Endothelial cell of umbilical vein (primary cell): ENCODE measurements at regions of chr16 and their contacts with region 1.

Region 1: DNA sequence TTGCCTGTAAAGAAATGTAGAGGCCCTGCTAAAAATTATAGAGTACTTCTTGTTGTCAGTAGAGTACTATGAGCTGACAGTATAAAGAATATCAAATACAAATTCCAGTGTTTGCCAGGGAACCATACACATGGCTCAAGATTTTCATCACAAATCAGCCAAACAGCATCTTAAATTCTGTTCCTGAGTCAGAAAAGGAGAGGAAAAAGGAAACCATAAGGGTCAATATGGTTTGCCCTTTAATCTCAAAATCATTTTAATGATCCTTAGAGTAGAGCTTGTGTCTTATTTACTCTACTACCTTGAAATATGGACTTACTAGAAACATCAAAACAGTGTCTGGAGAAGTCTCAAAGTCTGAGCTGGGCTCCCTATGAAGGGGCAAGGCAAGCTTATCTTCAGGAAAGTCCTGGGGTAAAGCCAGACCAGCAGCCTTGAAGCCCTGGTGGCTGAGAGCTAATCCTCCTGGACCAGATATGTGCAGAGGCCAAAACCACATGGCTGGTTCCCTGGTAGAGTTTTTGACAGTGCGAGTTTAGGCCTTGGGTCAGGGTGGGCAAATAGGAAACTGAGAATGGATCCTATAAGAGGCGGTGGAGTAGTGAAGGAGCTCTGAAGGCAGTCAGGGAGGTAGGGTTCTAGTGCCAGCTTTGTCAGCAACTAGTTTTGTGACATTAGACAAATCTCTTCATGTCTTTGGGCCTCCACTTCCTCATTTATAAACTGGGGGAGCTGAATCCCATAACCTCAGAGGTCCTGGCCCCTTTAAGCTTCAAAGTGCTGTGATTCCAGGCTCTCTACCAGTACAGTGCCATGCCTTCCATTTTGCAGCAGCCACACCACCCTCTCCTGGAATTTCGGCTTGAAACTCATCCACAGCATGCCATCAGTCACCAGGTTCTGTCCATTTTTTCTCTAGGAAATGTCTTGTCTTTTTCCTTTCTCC is 38.9 kb downstream of the MRTFB start:
- DNase-seq: peak; percentile 40
- H3K4me3 ChIP-seq: no peak overlapping the region
- H3K27ac ChIP-seq: no peak overlapping the region
- H3K4me1 ChIP-seq: peaks cover 27% of the 10 kb centered on the region
- H3K27me3 ChIP-seq: no peaks in the 10 kb centered on the region
- CTCF ChIP-seq: no peak
- POLR2A ChIP-seq: no peak

Region 2: DNA sequence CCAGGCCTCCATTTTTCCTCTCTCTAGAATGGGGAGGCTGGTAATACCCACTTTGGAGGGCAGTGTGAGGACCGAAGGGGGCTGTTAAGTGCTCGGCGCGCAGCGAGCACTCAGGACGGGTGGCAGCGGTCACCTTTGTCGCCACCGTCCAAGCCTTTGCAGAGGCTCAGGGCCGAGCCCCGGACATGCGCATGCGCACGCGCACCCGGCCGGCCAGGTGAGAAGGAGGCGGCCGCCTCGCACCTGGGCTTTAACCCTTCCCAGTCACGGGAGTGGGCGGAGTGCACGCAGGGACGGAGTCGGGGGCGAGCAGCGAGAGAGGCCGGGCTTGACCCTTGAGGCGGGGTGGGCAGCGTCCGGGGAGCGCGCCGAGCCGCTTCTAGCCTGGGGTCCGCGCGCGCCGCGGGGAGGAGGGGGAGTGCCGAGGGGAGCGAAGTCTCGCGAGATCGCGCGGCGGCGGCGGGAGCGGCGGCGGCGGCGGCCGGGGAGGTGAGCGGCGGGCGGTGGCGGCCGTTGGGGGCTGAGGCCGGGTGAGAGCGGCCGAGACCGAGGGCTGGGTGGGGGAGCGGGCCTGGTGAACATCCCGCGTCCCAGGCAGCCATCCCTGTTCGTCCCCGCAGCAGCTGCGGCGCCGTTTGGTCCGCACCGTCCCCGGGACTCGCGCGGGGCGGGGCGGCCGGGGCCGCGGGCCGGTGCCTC is 39.0 kb before region 1 on chr16 and contains the start of gene MRTFB:
- CTCF ChIA-PET with region 1: no interaction called
- POLR2A ChIA-PET with region 1: no interaction called
- dilution Hi-C with region 1: no loop called
- intact Hi-C with region 1: no loop called
- DNase-seq: peak; percentile 70
- H3K4me3 ChIP-seq: peak within 1 kb of the TSS; percentile 74 to 96 (median 82)
- H3K27ac ChIP-seq: peak within 1 kb of the TSS; percentile 68
- H3K4me1 ChIP-seq: peaks cover 11% of the 10 kb centered on the region
- H3K27me3 ChIP-seq: no peaks in the 10 kb centered on the region
- CTCF ChIP-seq: no peak
- POLR2A ChIP-seq: no peak
- total RNA-seq, gene MRTFB: 49.5 and 50.2 TPM in 2 replicates

Region 3: GRCh38 chr16:14097182-14097959 is 12.7 kb before region 1 on chr16:
- CTCF ChIA-PET with region 1: interaction called, 15 read pairs
- POLR2A ChIA-PET with region 1: no interaction called
- dilution Hi-C with region 1: no loop called
- intact Hi-C with region 1: no loop called
- DNase-seq: no peak
- H3K4me3 ChIP-seq: no peak overlapping the region
- H3K27ac ChIP-seq: no peak overlapping the region
- H3K4me1 ChIP-seq: peaks cover 8% of the 10 kb centered on the region
- H3K27me3 ChIP-seq: no peaks in the 10 kb centered on the region
- CTCF ChIP-seq: no peak
- POLR2A ChIP-seq: no peak

Region 4: DNA sequence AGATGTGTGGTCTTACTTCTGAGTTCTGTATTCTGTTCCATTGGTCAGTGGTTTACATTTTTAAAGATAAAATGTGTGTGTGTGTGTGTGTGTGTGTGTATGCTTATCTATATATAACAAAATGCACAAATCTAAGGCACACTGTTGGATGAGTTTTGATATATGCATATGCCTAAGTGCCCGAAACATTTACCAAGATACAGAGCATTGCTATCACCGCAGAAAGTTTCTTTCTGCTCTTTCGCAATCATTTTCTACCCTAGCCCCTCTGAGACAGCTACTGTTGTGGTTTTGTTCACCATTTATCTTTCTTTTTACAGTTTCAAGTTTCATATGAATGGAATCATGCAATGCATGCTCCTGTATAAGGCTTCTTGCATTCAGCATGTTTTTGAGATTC is 58.1 kb after region 1 on chr16:
- CTCF ChIA-PET with region 1: no interaction called
- POLR2A ChIA-PET with region 1: no interaction called
- dilution Hi-C with region 1: no loop called
- intact Hi-C with region 1: no loop called
- DNase-seq: no peak
- H3K4me3 ChIP-seq: no peak overlapping the region
- H3K27ac ChIP-seq: no peak overlapping the region
- H3K4me1 ChIP-seq: no peaks in the 10 kb centered on the region
- H3K27me3 ChIP-seq: no peaks in the 10 kb centered on the region
- CTCF ChIP-seq: no peak
- POLR2A ChIP-seq: no peak

Region 5: DNA sequence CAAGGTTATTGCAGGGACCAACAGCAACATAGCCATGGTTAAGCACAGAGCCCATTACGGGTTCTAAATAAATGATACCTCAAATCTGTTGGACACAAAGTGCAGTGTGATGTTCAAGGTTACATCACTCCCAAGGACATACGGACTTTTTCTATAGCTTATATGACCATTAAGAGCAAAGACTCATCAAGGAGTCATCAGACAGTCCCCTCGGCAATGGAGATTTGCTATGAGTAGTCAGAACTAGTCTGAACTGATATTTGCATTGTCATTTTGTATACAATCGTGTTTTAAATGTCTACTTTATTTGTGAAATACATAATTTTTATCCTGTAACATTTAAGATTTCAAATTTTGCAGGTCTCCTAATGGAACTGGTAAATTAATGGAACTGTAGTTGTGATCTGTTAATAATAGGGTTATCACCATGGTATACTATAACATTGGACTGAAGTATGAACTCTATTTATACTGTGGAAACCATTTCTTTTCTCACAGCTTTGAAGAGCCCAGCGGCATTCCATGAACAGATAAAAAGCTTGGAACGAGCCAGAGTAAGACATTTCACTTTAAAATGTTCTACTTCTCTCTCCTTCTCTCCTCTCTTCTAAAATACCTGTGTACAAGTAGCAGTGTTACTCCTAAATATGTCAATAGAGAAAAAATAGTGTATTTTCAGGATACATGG is 101.9 kb after region 1 on chr16:
- CTCF ChIA-PET with region 1: no interaction called
- POLR2A ChIA-PET with region 1: no interaction called
- dilution Hi-C with region 1: no loop called
- intact Hi-C with region 1: no loop called
- DNase-seq: no peak
- H3K4me3 ChIP-seq: no peak overlapping the region
- H3K27ac ChIP-seq: no peak overlapping the region
- H3K4me1 ChIP-seq: no peaks in the 10 kb centered on the region
- H3K27me3 ChIP-seq: no peaks in the 10 kb centered on the region
- CTCF ChIP-seq: no peak
- POLR2A ChIP-seq: no peak